ENCODE measurements at regions of chr20 and their contacts with region 1.

Region 1: DNA sequence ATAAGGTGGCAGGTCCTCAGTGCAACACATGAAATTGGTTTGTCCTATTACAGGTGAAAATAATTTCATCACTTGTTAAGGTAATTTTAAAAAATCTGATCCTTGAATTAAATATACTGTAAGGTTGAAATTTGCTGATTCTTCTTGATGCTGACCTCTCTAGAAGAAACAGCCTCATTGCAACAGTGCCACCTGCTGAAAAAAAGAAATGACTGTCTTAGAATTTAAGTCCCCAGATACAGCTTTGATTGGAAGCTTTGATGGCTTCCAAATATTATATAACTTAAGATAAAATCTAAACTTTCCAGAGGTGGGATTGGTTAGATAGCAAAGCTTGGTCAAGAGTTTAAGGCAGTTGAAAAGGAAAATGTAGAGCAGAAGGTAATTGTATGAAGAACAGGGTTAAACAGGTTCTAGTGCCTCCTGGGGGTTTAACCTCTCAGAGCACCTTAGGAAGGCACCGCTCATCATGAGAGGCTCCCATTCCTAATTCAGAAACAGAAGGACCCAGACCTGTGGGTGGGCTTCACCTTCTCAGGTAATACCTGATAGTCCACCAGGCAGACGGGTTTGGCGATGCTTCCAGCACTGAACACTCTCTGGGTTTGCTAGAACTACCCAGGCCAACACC is 401.0 kb downstream of the PAX1 start:
- DNase-seq: peak; percentile 61
- ATAC-seq: peak; percentile 77
- H3K4me3 ChIP-seq: no peak overlapping the region
- H3K27ac ChIP-seq: no peak overlapping the region
- H3K4me1 ChIP-seq: no peaks in the 10 kb centered on the region
- H3K27me3 ChIP-seq: no peaks in the 10 kb centered on the region; a peak in 1 of 5 replicates
- CTCF ChIP-seq: peak; percentile 63
- EP300 ChIP-seq: no peak
- POLR2A ChIP-seq: no peak
- RAD21 ChIP-seq: peak; percentile 58; the same call in 1 of the 2 replicates

Region 2: GRCh38 chr20:21640561-21641182 is 465.8 kb before region 1 on chr20:
- CTCF ChIA-PET with region 1: no interaction called
- POLR2A ChIA-PET with region 1: no interaction called
- in situ Hi-C with region 1: loop called (anchors 5 kb)
- intact Hi-C with region 1: loop called (anchors 5 kb)
- DNase-seq: peak; percentile 44
- ATAC-seq: peak; percentile 94
- H3K4me3 ChIP-seq: no peak overlapping the region
- H3K27ac ChIP-seq: no peak overlapping the region
- H3K4me1 ChIP-seq: no peaks in the 10 kb centered on the region
- H3K27me3 ChIP-seq: peaks cover 0 to 9% of the 10 kb centered on the region in 2 experiments; a peak in 1 of 5 replicates
- CTCF ChIP-seq: peak; percentile 67
- EP300 ChIP-seq: no peak
- POLR2A ChIP-seq: no peak
- RAD21 ChIP-seq: no peak

Region 3: GRCh38 chr20:21702553-21703470 is 403.6 kb before region 1 on chr20:
- CTCF ChIA-PET with region 1: no interaction called
- POLR2A ChIA-PET with region 1: no interaction called
- in situ Hi-C with region 1: loop called (anchors 10 kb)
- intact Hi-C with region 1: no loop called
- DNase-seq: peak; percentile 39
- ATAC-seq: peak; percentile 91
- H3K4me3 ChIP-seq: 0 out of 6 replicates have a peak overlapping the region, but pooled peaks of 1 of the 3 experiments have one; percentile 12
- H3K27ac ChIP-seq: no peak overlapping the region
- H3K4me1 ChIP-seq: no peaks in the 10 kb centered on the region
- H3K27me3 ChIP-seq: peaks cover 26 to 87% of the 10 kb centered on the region in 2 experiments
- CTCF ChIP-seq: peak; percentile 86
- EP300 ChIP-seq: no peak
- POLR2A ChIP-seq: no peak
- RAD21 ChIP-seq: no peak

Region 4: GRCh38 chr20:21719592-21720214 is 386.7 kb before region 1 on chr20:
- CTCF ChIA-PET with region 1: interaction called, 21 read pairs
- POLR2A ChIA-PET with region 1: no interaction called
- in situ Hi-C with region 1: no loop called
- intact Hi-C with region 1: loop called (anchors 1 kb)
- DNase-seq: peak; percentile 68
- ATAC-seq: peak; percentile 58; the same call in 2 of the 3 replicates
- H3K4me3 ChIP-seq: no peak overlapping the region
- H3K27ac ChIP-seq: no peak overlapping the region
- H3K4me1 ChIP-seq: no peaks in the 10 kb centered on the region
- H3K27me3 ChIP-seq: peaks cover 1 to 35% of the 10 kb centered on the region in 2 experiments
- CTCF ChIP-seq: peak; percentile 71
- EP300 ChIP-seq: no peak
- POLR2A ChIP-seq: no peak
- RAD21 ChIP-seq: no peak

Region 5: GRCh38 chr20:21808863-21809664 is 297.4 kb before region 1 on chr20:
- CTCF ChIA-PET with region 1: interaction called, 36 read pairs
- POLR2A ChIA-PET with region 1: no interaction called
- in situ Hi-C with region 1: loop called (anchors 5 kb)
- intact Hi-C with region 1: no loop called
- DNase-seq: peak; percentile 31
- ATAC-seq: peak; percentile 92
- H3K4me3 ChIP-seq: no peak overlapping the region
- H3K27ac ChIP-seq: no peak overlapping the region
- H3K4me1 ChIP-seq: no peaks in the 10 kb centered on the region
- H3K27me3 ChIP-seq: peaks cover 3 to 10% of the 10 kb centered on the region in 2 experiments; a peak in 2 of 5 replicates
- CTCF ChIP-seq: peak; percentile 94
- EP300 ChIP-seq: no peak
- POLR2A ChIP-seq: no peak
- RAD21 ChIP-seq: peak; percentile 83

Region 6: DNA sequence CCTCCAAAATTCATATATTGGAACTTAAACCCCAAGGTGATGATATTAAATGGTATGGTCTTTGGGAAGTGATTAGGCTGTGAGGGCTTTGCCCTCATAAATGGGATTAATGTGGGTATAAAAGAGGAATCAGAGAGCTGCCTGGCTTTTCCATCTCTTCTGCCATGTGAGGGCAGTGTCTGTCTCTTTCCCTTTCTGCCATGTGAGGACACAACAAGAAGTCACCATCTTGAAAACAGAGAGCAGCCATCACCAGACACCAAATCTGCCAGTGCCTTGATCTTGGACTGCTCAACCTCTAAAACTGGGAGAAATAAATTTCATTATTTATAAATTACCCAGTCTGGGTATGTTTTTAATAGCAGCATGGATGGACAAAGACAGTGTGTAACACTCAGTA is 137.9 kb before region 1 on chr20:
- CTCF ChIA-PET with region 1: interaction called, 4 read pairs
- POLR2A ChIA-PET with region 1: no interaction called
- in situ Hi-C with region 1: no loop called
- intact Hi-C with region 1: loop called (anchors 1 kb)
- DNase-seq: no peak
- ATAC-seq: no peak; the same call in 2 of the 3 replicates
- H3K4me3 ChIP-seq: no peak overlapping the region
- H3K27ac ChIP-seq: no peak overlapping the region
- H3K4me1 ChIP-seq: no peaks in the 10 kb centered on the region
- H3K27me3 ChIP-seq: no peaks in the 10 kb centered on the region
- CTCF ChIP-seq: peak; percentile 26; the same call in 1 of the 2 replicates
- EP300 ChIP-seq: no peak
- POLR2A ChIP-seq: no peak
- RAD21 ChIP-seq: no peak

Region 7: GRCh38 chr20:22312744-22313346 is 206.4 kb after region 1 on chr20:
- CTCF ChIA-PET with region 1: no interaction called
- POLR2A ChIA-PET with region 1: no interaction called
- in situ Hi-C with region 1: no loop called
- intact Hi-C with region 1: no loop called
- DNase-seq: peak; percentile 53
- ATAC-seq: peak; percentile 41; the same call in 2 of the 3 replicates
- H3K4me3 ChIP-seq: no peak overlapping the region
- H3K27ac ChIP-seq: no peak overlapping the region
- H3K4me1 ChIP-seq: no peaks in the 10 kb centered on the region
- H3K27me3 ChIP-seq: peaks cover 2 to 14% of the 10 kb centered on the region in 2 experiments; a peak in 2 of 5 replicates
- CTCF ChIP-seq: peak; percentile 77
- EP300 ChIP-seq: no peak
- POLR2A ChIP-seq: no peak
- RAD21 ChIP-seq: peak; percentile 48